Activated CD4-positive, alpha-beta memory T cell treated with anti-CD3 and anti-CD28 coated beads, Interleukin-2, amount 10 ng/mL, durations not matched to agents 7 days and 5 days (primary cell): ENCODE measurements at regions of chr5 and their contacts with region 1.

Region 1: DNA sequence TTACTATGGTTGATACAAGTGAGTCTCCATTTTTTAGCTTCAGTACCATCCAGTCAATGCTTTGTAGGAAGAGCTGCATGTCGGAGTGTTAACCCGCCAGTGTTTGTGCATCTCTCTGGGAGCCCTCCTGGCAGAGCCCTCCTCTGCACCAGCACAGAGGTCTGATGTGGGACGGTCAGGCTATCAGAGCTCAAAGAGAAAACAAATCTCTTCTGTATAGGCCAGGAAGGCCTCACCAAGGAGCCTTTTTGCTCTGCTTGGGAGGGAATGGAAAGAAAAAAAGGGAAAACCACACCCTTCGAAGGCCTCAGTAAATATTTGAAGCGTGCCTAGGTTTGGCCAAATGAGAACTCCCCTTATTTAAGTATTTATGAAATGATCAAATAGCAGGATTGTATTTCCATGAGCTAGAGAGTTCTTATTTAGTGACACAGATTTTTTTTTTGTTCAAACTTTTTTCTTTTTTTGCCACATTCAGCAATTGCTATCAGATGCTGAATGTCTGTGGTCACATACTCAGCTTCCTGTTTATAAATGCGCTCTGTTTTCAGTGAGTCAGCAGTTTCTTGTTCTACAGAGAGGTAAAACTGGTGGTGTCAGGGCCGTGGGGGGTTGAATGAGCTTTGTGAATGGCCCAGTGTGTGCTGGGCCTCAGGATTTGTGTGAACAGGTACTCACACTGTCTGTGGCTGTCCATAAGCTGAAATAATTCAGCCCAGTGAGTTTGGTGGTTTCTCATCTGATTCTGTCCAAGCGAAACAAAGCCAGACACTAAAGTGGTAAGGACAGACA is 226.6 kb downstream of the SNX18 start:
- DNase-seq: peak; percentile 71
- H3K4me3 Mint-ChIP-seq: peak overlapping the region; percentile 35
- H3K27ac Mint-ChIP-seq: peak overlapping the region; percentile 89
- H3K4me1 Mint-ChIP-seq: peaks cover 56% of the 10 kb centered on the region
- H3K27me3 Mint-ChIP-seq: peaks cover 3% of the 10 kb centered on the region

Region 2: GRCh38 chr5:54581831-54582548 is 162.2 kb before region 1 on chr5:
- CTCF ChIA-PET with region 1: no interaction called
- POLR2A ChIA-PET with region 1: no interaction called
- DNase-seq: no peak
- H3K4me3 Mint-ChIP-seq: no peak overlapping the region
- H3K27ac Mint-ChIP-seq: no peak overlapping the region
- H3K4me1 Mint-ChIP-seq: peaks cover 6% of the 10 kb centered on the region
- H3K27me3 Mint-ChIP-seq: no peaks in the 10 kb centered on the region

Region 3: GRCh38 chr5:54646356-54647101 is 97.7 kb before region 1 on chr5:
- CTCF ChIA-PET with region 1: interaction called, 6 read pairs
- POLR2A ChIA-PET with region 1: interaction called, 13 read pairs
- DNase-seq: peak; percentile 89
- H3K4me3 Mint-ChIP-seq: peak overlapping the region; percentile 59
- H3K27ac Mint-ChIP-seq: peak overlapping the region; percentile 99
- H3K4me1 Mint-ChIP-seq: peaks cover 55% of the 10 kb centered on the region
- H3K27me3 Mint-ChIP-seq: no peaks in the 10 kb centered on the region

Region 4: GRCh38 chr5:54725391-54726280 is 18.6 kb before region 1 on chr5:
- CTCF ChIA-PET with region 1: interaction called, 10 read pairs
- POLR2A ChIA-PET with region 1: interaction called, 12 read pairs
- DNase-seq: no peak
- H3K4me3 Mint-ChIP-seq: no peak overlapping the region
- H3K27ac Mint-ChIP-seq: no peak overlapping the region
- H3K4me1 Mint-ChIP-seq: peaks cover 6% of the 10 kb centered on the region
- H3K27me3 Mint-ChIP-seq: peaks cover 5% of the 10 kb centered on the region

Region 5: DNA sequence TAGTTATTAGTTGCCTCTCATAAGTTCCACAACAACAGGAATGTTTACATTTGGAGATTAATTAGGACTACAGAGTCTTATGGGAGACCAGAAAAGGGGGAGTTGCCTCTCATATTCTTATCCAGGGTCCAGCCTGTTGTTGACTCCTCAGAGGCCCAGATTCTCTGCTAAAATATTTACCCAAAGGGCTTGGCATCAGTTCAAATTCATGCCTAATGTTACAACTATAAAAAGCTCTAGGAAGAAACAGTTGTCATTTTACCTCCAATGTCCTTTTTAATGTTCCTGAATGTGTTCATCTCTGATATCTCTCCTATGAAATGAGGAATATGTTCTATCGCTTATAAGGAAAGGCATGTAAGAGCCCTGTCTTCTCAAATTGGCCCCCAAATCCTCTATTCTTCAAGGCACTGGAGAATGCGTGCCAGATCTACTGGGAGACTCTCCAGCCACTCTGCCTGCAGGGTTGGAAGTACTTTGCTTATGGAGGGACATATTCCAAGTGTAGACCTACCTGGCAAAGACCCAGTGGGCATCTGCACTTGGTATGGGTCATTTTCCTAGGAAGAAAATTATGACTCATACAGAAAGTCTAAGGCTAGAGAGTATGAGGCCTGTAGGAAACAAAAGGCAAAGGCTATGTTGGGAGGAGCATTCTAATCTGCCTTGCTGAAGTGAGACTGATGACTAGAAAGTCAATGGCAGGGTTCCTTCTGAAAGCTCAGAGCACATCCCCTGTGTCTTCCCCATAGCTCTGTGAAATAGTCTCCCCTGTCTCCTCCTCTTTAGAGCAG is 48.6 kb after region 1 on chr5:
- CTCF ChIA-PET with region 1: interaction called, 6 read pairs
- POLR2A ChIA-PET with region 1: interaction called, 17 read pairs
- DNase-seq: no peak
- H3K4me3 Mint-ChIP-seq: no peak overlapping the region
- H3K27ac Mint-ChIP-seq: peak overlapping the region; percentile 42
- H3K4me1 Mint-ChIP-seq: peaks cover 42% of the 10 kb centered on the region
- H3K27me3 Mint-ChIP-seq: peaks cover 13% of the 10 kb centered on the region

Region 6: GRCh38 chr5:54944364-54944763 is 200.2 kb after region 1 on chr5:
- CTCF ChIA-PET with region 1: no interaction called
- POLR2A ChIA-PET with region 1: no interaction called
- DNase-seq: peak; percentile 43
- H3K4me3 Mint-ChIP-seq: no peak overlapping the region
- H3K27ac Mint-ChIP-seq: no peak overlapping the region
- H3K4me1 Mint-ChIP-seq: peaks cover 10% of the 10 kb centered on the region
- H3K27me3 Mint-ChIP-seq: peaks cover 2% of the 10 kb centered on the region